PC-3 (cell line): ENCODE measurements at regions of chr12 and their contacts with region 1.

Region 1: DNA sequence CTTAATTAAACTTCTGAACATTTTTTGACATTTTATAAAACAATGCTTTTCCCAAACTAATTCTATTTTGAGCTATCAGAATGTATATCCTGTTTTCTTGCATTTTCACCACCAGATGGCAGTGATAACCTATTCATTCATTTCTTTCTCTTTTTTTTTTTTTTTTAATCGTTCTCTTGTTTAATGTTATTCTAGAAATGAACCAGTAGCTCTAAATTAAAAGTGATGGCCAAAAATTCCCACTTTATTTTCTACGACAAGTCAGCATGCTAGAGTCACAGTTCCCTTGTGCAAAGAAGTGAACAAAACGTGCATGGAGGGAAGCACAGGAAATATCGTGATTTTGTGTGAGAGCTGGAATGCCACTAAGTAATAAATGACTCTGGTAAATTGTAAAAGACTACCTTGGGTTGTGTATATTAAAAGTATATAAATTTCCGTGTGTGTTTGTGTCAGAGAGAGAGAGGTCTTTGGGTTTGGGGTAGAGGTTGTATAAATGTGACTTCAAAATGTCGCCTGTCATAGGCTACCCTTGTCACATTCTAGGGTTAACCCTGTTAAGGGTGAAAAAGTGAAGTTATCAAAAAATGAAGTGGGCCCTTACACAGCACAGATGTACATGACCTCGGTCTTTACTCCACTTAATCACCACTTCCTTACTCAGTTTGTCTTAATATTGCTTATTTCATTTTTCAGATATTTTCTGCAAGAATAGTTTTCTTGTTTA is 40.4 kb upstream of the LDHB start:
- DNase-seq: peak; percentile 44
- ATAC-seq: no peak
- H3K4me3 ChIP-seq: no peak overlapping the region
- H3K27ac ChIP-seq: no peak overlapping the region
- H3K4me1 ChIP-seq: no peaks in the 10 kb centered on the region
- H3K27me3 ChIP-seq: no peaks in the 10 kb centered on the region
- CTCF ChIP-seq: peak; percentile 70

Region 2: DNA sequence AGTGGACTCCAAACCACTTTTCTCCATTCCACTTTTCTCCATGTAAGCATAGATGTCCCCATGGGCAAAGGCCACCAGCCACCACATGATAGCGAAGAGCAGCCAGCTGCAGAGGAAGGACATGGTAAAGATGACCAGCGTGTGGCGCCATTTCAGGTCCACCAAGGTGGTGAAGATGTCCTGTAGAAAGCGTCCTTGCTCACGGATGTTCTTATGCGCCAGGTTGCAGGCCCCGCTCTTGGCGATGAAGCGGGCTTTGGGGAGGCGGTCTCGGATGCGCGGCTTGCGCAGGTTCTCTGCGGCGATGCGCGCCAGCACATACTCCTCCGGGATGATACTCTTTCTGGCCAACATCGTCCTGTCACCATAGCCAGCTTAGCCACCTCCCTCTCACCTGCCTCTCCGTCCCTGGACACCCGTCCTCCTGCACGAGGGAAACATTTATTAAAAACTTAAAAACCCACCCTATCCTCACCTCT is 75.2 kb after region 1 on chr12:
- CTCF ChIA-PET with region 1: no interaction called
- POLR2A ChIA-PET with region 1: no interaction called
- intact Hi-C with region 1: loop called (anchors 5 kb)
- DNase-seq: peak; percentile 11
- ATAC-seq: no peak
- H3K4me3 ChIP-seq: no peak overlapping the region
- H3K27ac ChIP-seq: no peak overlapping the region
- H3K4me1 ChIP-seq: no peaks in the 10 kb centered on the region
- H3K27me3 ChIP-seq: no peaks in the 10 kb centered on the region
- CTCF ChIP-seq: peak; percentile 56; the same call in 1 of the 2 replicates

Region 3: GRCh38 chr12:21881965-21882364 is 183.9 kb after region 1 on chr12:
- CTCF ChIA-PET with region 1: interaction called, 3 read pairs
- POLR2A ChIA-PET with region 1: interaction called, 16 read pairs
- intact Hi-C with region 1: no loop called
- DNase-seq: no peak
- ATAC-seq: no peak
- H3K4me3 ChIP-seq: no peak overlapping the region
- H3K27ac ChIP-seq: no peak overlapping the region
- H3K4me1 ChIP-seq: no peaks in the 10 kb centered on the region
- H3K27me3 ChIP-seq: no peaks in the 10 kb centered on the region
- CTCF ChIP-seq: no peak

Region 4: DNA sequence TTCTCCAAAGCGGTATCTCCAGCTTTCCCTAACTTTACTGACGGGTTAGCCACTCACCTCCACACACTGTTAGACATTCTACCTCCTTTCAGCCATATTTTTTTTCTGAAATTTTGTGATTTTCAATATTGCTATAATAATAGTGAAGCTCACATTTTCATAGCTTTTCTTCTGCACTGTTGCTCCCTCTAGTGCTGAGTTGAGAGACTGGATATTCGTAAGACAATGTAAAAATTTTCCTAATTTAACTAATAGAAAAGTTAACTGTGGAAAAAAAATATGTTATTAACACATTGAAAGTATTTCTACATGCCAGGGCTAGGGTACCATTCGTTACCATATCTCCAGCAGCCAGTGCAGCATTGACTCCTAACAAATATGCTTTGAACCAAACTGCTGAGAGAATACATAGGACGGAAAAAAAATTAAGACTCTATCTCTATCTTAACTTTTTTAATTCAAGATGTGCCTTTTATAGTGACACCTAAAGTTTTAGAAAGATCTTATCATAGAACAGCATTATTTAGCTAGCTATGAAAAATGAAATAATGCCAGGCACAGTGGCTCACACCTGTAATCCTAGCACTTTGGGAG is 291.8 kb after region 1 on chr12:
- CTCF ChIA-PET with region 1: interaction called, 43 read pairs
- POLR2A ChIA-PET with region 1: interaction called, 5 read pairs
- intact Hi-C with region 1: loop called (anchors 1 kb)
- DNase-seq: peak; percentile 61
- ATAC-seq: peak; percentile 46
- H3K4me3 ChIP-seq: no peak overlapping the region
- H3K27ac ChIP-seq: no peak overlapping the region
- H3K4me1 ChIP-seq: peaks cover 4% of the 10 kb centered on the region; the same call in 1 of the 2 replicates
- H3K27me3 ChIP-seq: no peaks in the 10 kb centered on the region
- CTCF ChIP-seq: peak; percentile 71

Region 5: GRCh38 chr12:22018860-22019259 is 320.8 kb after region 1 on chr12:
- CTCF ChIA-PET with region 1: interaction called, 5 read pairs
- POLR2A ChIA-PET with region 1: no interaction called
- intact Hi-C with region 1: loop called (anchors 1 kb)
- DNase-seq: peak; percentile 30
- ATAC-seq: no peak
- H3K4me3 ChIP-seq: no peak overlapping the region
- H3K27ac ChIP-seq: no peak overlapping the region
- H3K4me1 ChIP-seq: peaks cover 12% of the 10 kb centered on the region; the same call in 1 of the 2 replicates
- H3K27me3 ChIP-seq: no peaks in the 10 kb centered on the region
- CTCF ChIP-seq: peak; percentile 67